Cardiac septum (tissue), 1 donor: ENCODE measurements at regions of chr5 and their contacts with region 1.

Region 1: DNA sequence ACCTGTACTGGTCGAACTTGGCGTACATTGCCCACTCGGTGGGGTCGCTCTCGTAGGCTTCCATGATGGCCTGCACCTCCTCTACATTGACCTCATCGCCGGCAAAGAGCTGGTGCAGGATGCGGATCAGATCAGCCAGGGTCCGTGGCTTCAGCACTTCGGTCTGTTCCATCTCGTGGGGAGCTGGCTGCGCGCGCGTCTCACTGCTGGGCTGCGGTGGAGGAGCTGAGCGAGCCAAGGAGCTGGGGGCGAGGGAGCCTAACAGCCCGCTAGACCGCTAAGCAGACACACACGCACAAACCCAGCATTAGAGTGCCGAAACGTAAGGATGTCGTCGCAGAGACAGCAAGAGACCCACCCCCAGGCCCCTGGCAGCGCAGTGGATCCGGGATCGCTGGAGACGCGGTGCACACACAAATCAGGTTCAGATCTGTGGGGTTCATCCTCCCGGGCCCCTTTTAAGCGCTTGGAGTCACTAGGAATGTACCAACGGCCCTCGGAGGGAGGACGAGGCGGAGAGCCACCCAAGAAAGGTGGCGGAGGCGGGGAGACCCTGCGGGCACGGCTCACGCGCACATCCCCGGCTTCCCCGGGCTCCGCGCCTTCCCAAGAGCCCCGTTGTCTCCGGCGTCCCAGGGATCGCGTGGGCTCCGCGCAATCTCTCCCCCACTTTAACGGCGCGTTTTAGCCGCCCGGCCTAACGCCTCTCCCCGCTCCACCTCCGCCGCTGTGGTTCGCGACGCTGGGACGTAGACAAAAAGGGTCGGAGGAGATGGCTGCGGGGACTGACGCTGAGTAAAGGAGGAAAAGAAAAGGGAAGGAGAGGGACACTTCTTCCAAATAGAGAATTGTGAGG is at the start of gene CDO1:
- DNase-seq: peak; percentile 76
- total RNA-seq, gene CDO1: 3.6 TPM

Region 2: DNA sequence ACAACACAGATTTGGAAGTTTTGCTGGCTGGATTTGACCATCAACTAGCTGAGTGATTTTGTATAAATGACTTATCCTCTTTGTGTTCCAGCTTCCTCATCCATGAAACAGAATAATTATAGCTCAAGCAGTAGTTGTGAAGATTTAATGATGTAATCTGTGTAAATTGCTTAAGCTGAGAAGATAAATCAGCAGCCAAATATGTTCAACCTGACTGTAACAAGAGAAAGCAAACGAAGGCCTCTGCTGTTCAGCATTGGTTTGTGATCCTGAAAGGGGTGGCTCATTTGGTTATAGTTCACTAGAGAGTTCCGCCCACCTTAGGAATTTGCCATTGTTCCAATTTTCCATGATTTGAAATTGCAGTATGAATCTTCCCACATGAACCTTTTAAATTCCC is 444.3 kb before region 1 on chr5:
- intact Hi-C with region 1: loop called (anchors 5 kb)
- DNase-seq: no peak

Region 3: GRCh38 chr5:115774684-115775083 is 41.8 kb before region 1 on chr5:
- intact Hi-C with region 1: loop called (anchors 5 kb)
- DNase-seq: no peak